ENCODE measurements at regions of chrX and their contacts with region 1.

Region 1: GRCh38 chrX:18674788-18675735 is 3.2 kb upstream of the RS1 start:
- DNase-seq: peak; percentile 72 to 88
- H3K4me3 ChIP-seq: peak overlapping the region; percentile 94
- H3K4me1 ChIP-seq: peaks cover 18% of the 10 kb centered on the region
- H3K27me3 ChIP-seq: no peaks in the 10 kb centered on the region

Region 2: DNA sequence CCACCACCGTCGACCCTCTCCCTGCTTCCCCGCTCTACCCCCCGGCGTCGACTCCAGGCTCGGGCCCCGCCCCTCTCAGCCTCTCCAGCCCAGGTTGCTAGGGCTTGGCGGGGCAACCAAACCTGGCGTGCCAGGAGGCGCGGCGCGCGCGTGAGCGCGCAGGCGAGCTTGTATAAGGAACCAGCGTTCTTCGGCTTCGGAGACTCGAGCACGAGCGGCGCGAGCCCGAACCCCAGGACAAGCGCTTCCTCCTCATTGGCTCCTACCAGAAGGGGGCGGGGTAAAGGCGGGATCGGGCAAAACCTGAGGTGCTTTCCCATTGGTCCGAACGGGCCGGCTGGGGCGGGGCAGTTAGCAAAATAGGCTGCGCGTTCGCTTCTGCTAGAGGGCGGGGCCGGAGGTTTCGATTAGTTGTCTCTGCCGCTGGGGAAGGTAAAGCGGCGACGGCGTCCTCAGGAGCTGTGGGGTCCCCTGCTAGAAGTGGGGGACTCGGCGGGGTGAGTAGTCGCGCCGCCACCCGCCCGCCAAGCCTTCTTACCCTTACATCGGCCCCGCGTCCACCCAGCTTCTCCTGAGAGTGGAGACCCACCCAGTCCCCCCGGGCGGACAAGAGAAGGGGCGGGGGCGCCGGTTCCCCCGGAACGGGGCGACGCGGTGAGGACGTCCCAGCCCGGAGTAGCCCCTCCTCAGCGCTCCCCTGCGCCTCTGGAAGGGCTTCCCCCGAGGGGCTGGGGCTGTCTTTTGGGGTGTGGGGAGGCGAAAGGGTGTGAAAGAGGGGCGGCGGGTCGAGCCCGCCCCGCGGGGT is 249.7 kb before region 1 on chrX and contains the start of gene CDKL5:
- in situ Hi-C with region 1: loop called (anchors 10 kb)
- DNase-seq: peak; percentile 97 to 100
- H3K4me3 ChIP-seq: peak within 1 kb of the TSS; percentile 92
- H3K4me1 ChIP-seq: peaks cover 13% of the 10 kb centered on the region
- H3K27me3 ChIP-seq: no peaks in the 10 kb centered on the region

Region 3: GRCh38 chrX:19343535-19344408 is 668.7 kb after region 1 on chrX and contains the start of gene PDHA1:
- in situ Hi-C with region 1: loop called (anchors 25 kb)
- DNase-seq: peak; percentile 92 to 99
- H3K4me3 ChIP-seq: peak within 1 kb of the TSS; percentile 87
- H3K4me1 ChIP-seq: peaks cover 20% of the 10 kb centered on the region
- H3K27me3 ChIP-seq: no peaks in the 10 kb centered on the region

Measured in HAP-1 (cell line).